BJ (cell line): ENCODE measurements at regions of chr7 and their contacts with region 1.

Region 1: GRCh38 chr7:77425101-77426051 is 9.2 kb upstream of the GSAP start:
- DNase-seq: peak; percentile 14
- H3K4me3 ChIP-seq: no peak overlapping the region
- H3K27me3 ChIP-seq: no peaks in the 10 kb centered on the region
- CTCF ChIP-seq: no peak

Region 2: GRCh38 chr7:77306231-77307067 is 118.9 kb before region 1 on chr7:
- CTCF ChIA-PET with region 1: no interaction called
- POLR2A ChIA-PET with region 1: no interaction called
- DNase-seq: no peak
- H3K4me3 ChIP-seq: no peak overlapping the region
- H3K27me3 ChIP-seq: no peaks in the 10 kb centered on the region
- CTCF ChIP-seq: no peak

Region 3: GRCh38 chr7:77439572-77439971 is 14.2 kb after region 1 on chr7:
- CTCF ChIA-PET with region 1: interaction called, 3 read pairs
- POLR2A ChIA-PET with region 1: interaction called, 10 read pairs
- DNase-seq: no peak
- H3K4me3 ChIP-seq: no peak overlapping the region
- H3K27me3 ChIP-seq: no peaks in the 10 kb centered on the region
- CTCF ChIP-seq: 0 out of 2 replicates have a peak, but pooled peaks have one; percentile 14

Region 4: GRCh38 chr7:77516085-77516484 is 90.7 kb after region 1 on chr7:
- CTCF ChIA-PET with region 1: no interaction called
- POLR2A ChIA-PET with region 1: no interaction called
- DNase-seq: no peak
- H3K4me3 ChIP-seq: no peak overlapping the region
- H3K27me3 ChIP-seq: no peaks in the 10 kb centered on the region
- CTCF ChIP-seq: no peak